ENCODE measurements at regions of chr4 and their contacts with region 1.

Region 1: GRCh38 chr4:40228497-40229365 is 31.9 kb downstream of the RHOH start:
- DNase-seq: peak; percentile 56
- H3K4me3 Mint-ChIP-seq: peak overlapping the region; percentile 58
- H3K27ac Mint-ChIP-seq: peak overlapping the region; percentile 92
- H3K4me1 Mint-ChIP-seq: peaks cover 93% of the 10 kb centered on the region
- H3K27me3 Mint-ChIP-seq: no peaks in the 10 kb centered on the region

Region 2: GRCh38 chr4:40149960-40150385 is 78.8 kb before region 1 on chr4:
- CTCF ChIA-PET with region 1: no interaction called
- POLR2A ChIA-PET with region 1: no interaction called
- intact Hi-C with region 1: loop called (anchors 5 kb)
- DNase-seq: peak; percentile 74
- H3K4me3 Mint-ChIP-seq: no peak overlapping the region
- H3K27ac Mint-ChIP-seq: no peak overlapping the region
- H3K4me1 Mint-ChIP-seq: peaks cover 27% of the 10 kb centered on the region
- H3K27me3 Mint-ChIP-seq: no peaks in the 10 kb centered on the region

Region 3: GRCh38 chr4:40212674-40213527 is 15.8 kb before region 1 on chr4:
- CTCF ChIA-PET with region 1: interaction called, 17 read pairs
- POLR2A ChIA-PET with region 1: interaction called, 80 read pairs
- intact Hi-C with region 1: loop called (anchors 1 kb)
- DNase-seq: no peak
- H3K4me3 Mint-ChIP-seq: peak overlapping the region; percentile 73
- H3K27ac Mint-ChIP-seq: peak overlapping the region; percentile 91
- H3K4me1 Mint-ChIP-seq: peaks cover 89% of the 10 kb centered on the region
- H3K27me3 Mint-ChIP-seq: no peaks in the 10 kb centered on the region

Region 4: GRCh38 chr4:40255393-40256281 is 26.9 kb after region 1 on chr4:
- CTCF ChIA-PET with region 1: interaction called, 4 read pairs
- POLR2A ChIA-PET with region 1: interaction called, 3 read pairs
- intact Hi-C with region 1: loop called (anchors 1 kb)
- DNase-seq: no peak
- H3K4me3 Mint-ChIP-seq: no peak overlapping the region
- H3K27ac Mint-ChIP-seq: peak overlapping the region; percentile 72
- H3K4me1 Mint-ChIP-seq: peaks cover 59% of the 10 kb centered on the region
- H3K27me3 Mint-ChIP-seq: no peaks in the 10 kb centered on the region

Region 5: GRCh38 chr4:40908702-40909362 is 680.1 kb after region 1 on chr4:
- CTCF ChIA-PET with region 1: no interaction called
- POLR2A ChIA-PET with region 1: no interaction called
- intact Hi-C with region 1: loop called (anchors 10 kb)
- DNase-seq: peak; percentile 86
- H3K4me3 Mint-ChIP-seq: no peak overlapping the region
- H3K27ac Mint-ChIP-seq: peak overlapping the region; percentile 83
- H3K4me1 Mint-ChIP-seq: peaks cover 23% of the 10 kb centered on the region
- H3K27me3 Mint-ChIP-seq: no peaks in the 10 kb centered on the region

Measured in activated CD4-positive, alpha-beta memory T cell treated with anti-CD3 and anti-CD28 coated beads for 36 hours (primary cell).